ENCODE measurements at regions of chr4 and their contacts with region 1.

Region 1: DNA sequence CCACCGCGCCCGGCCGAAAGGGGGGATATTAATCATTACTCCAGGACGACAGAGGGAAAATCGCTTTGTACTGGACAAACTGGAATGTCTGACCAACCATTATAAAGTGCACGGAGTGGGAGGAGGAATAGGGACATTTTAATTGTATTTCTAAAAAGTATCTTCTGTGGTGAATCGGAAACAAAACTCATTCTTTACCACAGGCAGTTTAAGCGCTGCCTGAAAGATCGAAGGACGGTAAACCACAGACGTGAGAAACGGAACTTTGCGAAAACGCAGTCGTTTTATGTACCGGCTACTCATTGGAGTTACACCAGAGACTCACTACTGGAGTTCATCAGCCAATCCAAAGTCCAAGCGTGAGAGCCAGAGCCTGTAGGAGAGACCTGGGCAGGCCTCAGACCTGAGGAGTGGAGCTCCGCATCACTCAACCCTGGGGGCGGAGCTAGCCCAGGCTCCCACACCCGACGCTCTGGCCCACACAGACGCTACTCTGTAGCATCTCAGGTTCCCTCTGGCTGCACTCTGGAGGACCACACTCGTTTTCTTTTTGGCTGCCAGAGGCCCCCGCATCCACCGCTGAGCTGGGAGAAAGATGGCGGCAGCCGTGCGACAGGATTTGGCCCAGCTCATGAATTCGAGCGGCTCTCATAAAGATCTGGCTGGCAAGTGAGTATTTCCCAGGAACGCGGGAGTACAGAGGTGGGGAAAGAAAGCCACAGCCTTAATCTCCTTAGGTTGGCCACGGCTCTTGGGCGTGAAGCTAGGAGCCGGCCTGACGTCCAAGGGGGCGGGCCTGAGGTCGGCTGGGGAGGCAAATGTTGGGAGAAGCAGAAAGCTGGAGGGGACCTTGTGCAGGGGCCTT is at the start of gene COPS4:
- DNase-seq: peak; percentile 100
- ATAC-seq: peak; percentile 99
- H3K4me3 ChIP-seq: peak within 1 kb of the TSS; percentile 88 to 95 (median 92)
- H3K27ac ChIP-seq: peak within 1 kb of the TSS; percentile 98
- H3K4me1 ChIP-seq: peaks cover 43% of the 10 kb centered on the region
- H3K27me3 ChIP-seq: no peaks in the 10 kb centered on the region; a peak in 2 of 5 replicates
- CTCF ChIP-seq: no peak; the same call in 1 of the 2 replicates
- EP300 ChIP-seq: peak in 1 of 2 experiments; percentile 53; a peak in 1 of 4 replicates
- POLR2A ChIP-seq: peak; percentile 60 to 93; a peak in 3 of 4 replicates
- RAD21 ChIP-seq: peak; percentile 47; the same call in 1 of the 2 replicates
- total RNA-seq, gene COPS4: 52.5 and 90.4 TPM in 2 replicates

Region 2: DNA sequence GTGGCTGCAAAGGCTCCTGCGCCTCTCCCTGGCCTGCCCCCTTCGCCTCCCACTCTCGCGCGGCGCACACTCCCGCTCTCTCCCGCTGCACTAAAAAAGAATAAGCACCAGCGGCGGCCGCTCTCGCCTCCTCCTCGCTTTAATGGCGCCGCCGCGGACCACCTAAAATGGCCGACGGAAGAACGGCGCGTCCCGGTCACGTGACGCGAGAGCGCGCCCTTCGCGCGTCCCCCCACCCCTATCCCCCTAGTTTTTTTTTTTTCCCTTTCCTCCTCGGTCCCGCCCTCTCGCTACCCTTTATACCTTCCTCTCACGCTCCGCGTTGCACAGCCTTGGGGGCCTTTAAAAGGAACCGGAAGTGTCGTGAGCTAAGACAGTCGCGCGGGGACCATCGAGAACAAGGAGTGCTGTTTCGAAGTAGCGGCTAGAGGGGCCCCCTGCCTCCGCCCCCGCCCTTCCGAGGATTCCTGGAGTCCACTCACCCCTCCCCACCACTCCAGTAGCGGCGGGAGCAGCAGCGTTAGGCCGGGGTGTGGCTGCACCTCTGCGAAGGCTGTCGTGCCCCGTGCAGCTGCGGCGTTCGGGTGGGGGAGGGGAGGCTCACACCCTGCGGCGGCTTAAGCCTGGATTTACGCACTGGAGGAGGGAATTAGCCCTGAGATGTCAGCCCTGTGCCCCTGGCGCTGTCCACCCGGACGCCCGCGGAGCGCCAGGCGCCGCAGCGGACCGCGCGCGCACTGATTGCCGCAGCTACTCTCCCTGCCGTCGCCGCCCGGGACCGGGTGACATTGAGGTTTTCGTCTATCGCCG is 660.8 kb before region 1 on chr4 and contains the start of gene HNRNPD:
- CTCF ChIA-PET with region 1: no interaction called
- POLR2A ChIA-PET with region 1: interaction called, 11 read pairs
- in situ Hi-C with region 1: no loop called
- intact Hi-C with region 1: no loop called
- DNase-seq: peak; percentile 99
- ATAC-seq: peak; percentile 93
- H3K4me3 ChIP-seq: peak within 1 kb of the TSS; percentile 89 to 100 (median 98)
- H3K27ac ChIP-seq: peak within 1 kb of the TSS; percentile 99
- H3K4me1 ChIP-seq: peaks cover 31% of the 10 kb centered on the region
- H3K27me3 ChIP-seq: peaks cover 0 to 3% of the 10 kb centered on the region in 2 experiments; a peak in 1 of 5 replicates
- CTCF ChIP-seq: no peak; the same call in 1 of the 2 replicates
- EP300 ChIP-seq: peak; percentile 44 to 87; a peak in 3 of 4 replicates
- POLR2A ChIP-seq: peak; percentile 74 to 85
- RAD21 ChIP-seq: peak; percentile 73
- total RNA-seq, gene HNRNPD: 64.0 and 156 TPM in 2 replicates

Region 3: DNA sequence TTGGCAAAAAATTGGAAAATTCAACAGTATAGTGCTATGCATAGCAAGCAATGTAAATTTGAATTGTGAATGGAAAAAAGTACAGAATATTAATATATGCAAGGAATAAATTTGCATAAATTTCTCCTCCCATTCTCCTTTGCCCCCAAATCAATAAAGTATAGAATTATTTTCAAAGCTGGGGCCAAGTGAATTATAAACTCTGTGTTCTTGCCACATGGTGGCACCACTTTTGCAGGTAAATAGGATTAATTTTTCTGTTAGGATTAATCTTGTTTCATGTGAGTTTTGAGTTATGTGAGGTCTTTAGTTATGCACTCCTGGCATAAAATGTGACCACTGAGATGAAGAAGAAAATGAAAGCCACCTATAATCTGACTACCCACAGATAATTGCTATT is 20.1 kb after region 1 on chr4:
- CTCF ChIA-PET with region 1: no interaction called
- POLR2A ChIA-PET with region 1: no interaction called
- in situ Hi-C with region 1: no loop called
- intact Hi-C with region 1: no loop called
- DNase-seq: no peak
- ATAC-seq: no peak
- H3K4me3 ChIP-seq: no peak overlapping the region
- H3K27ac ChIP-seq: no peak overlapping the region
- H3K4me1 ChIP-seq: no peaks in the 10 kb centered on the region
- H3K27me3 ChIP-seq: no peaks in the 10 kb centered on the region; a peak in 1 of 5 replicates
- CTCF ChIP-seq: no peak
- EP300 ChIP-seq: no peak
- POLR2A ChIP-seq: no peak
- RAD21 ChIP-seq: no peak